ENCODE measurements at regions of chr22 and their contacts with region 1.

Region 1: DNA sequence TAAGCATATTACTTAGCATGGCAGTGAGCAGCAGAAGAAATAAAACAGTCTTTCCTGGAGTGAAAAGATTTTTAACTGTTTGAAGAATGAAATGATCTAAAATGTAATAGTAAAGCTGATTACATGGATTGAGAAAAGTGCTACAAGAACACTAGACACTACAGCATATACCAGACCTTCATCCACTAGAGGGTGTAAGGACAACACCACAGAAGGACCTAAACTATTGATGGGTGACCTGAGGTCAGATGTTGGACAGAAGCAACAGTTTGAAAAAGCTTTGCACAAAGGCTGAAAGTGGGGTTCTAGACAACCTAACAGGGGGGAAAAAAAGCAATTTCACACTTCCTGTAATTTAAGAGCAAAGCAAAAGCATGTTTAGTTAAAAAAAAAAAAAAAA is 97.7 kb downstream of the RBFOX2 start:
- DNase-seq: no peak
- H3K4me3 ChIP-seq: no peak overlapping the region
- H3K27ac ChIP-seq: no peak overlapping the region
- H3K4me1 ChIP-seq: no peaks in the 10 kb centered on the region
- H3K27me3 ChIP-seq: no peaks in the 10 kb centered on the region
- CTCF ChIP-seq: peak; percentile 15 to 68 (median 65)
- POLR2A ChIP-seq: no peak

Region 2: GRCh38 chr22:35792506-35792905 is 138.4 kb before region 1 on chr22:
- intact Hi-C with region 1: no loop called
- DNase-seq: no peak
- H3K4me3 ChIP-seq: no peak overlapping the region
- H3K27ac ChIP-seq: no peak overlapping the region
- H3K4me1 ChIP-seq: no peaks in the 10 kb centered on the region
- H3K27me3 ChIP-seq: no peaks in the 10 kb centered on the region
- CTCF ChIP-seq: no peak
- POLR2A ChIP-seq: no peak

Region 3: GRCh38 chr22:35918456-35918855 is 12.5 kb before region 1 on chr22:
- intact Hi-C with region 1: loop called (anchors 1 kb)
- DNase-seq: no peak
- H3K4me3 ChIP-seq: no peak overlapping the region
- H3K27ac ChIP-seq: peak overlapping the region in 1 of 2 donors; percentile 46
- H3K4me1 ChIP-seq: peaks cover 0 to 11% of the 10 kb centered on the region in 2 donors
- H3K27me3 ChIP-seq: no peaks in the 10 kb centered on the region
- CTCF ChIP-seq: no peak
- POLR2A ChIP-seq: no peak

Region 4: GRCh38 chr22:36104435-36104834 is 173.5 kb after region 1 on chr22:
- intact Hi-C with region 1: no loop called
- DNase-seq: no peak
- H3K4me3 ChIP-seq: no peak overlapping the region
- H3K27ac ChIP-seq: no peak overlapping the region
- H3K4me1 ChIP-seq: no peaks in the 10 kb centered on the region
- H3K27me3 ChIP-seq: no peaks in the 10 kb centered on the region
- CTCF ChIP-seq: no peak
- POLR2A ChIP-seq: no peak

Region 5: GRCh38 chr22:36123673-36124630 is 193.0 kb after region 1 on chr22:
- intact Hi-C with region 1: loop called (anchors 10 kb)
- DNase-seq: peak; percentile 89 to 96
- H3K4me3 ChIP-seq: peak overlapping the region in 2 of 3 donors; percentile 32 to 54
- H3K27ac ChIP-seq: peak overlapping the region; percentile 89 to 90
- H3K4me1 ChIP-seq: no peaks in the 10 kb centered on the region
- H3K27me3 ChIP-seq: no peaks in the 10 kb centered on the region
- CTCF ChIP-seq: peak; percentile 96 to 99 (median 98)
- POLR2A ChIP-seq: no peak

Region 6: DNA sequence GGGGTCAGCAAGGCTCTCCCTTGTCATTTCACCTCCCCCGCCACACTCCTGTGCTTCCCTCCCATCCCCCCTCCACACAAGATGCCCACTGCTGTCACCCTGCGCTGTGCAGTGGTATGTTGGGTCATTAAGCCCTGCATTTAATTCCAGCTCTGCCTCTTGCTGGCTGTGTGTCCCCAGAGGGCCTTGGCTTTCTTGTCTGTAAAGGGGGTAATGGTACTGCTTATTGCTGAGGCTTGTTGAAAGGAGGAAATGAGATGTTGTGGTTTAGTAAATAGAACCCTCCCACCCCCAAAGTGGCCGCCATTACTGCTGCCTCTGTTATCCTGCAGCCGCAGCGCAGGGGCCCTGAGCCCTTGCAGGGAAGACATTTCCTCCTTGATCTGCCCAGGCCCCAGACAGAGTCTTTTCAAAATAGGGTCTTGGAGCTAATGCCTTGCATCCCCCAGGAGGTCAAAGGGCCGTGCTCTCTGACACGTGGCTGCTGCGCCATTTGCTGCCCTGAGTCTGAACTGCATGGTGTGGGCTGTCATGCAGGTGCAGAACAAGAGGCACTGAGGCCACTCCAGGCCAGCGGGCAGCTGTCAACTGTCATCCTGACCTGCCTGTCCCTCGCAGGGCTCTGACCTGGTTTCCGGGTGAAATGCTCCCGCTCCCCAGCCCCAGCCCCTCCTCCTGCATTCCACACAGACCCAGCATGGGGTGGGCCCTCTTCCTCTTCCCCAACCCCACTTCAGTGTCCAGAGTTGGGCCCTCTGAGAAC is 867.2 kb after region 1 on chr22:
- intact Hi-C with region 1: no loop called
- DNase-seq: no peak
- H3K4me3 ChIP-seq: no peak overlapping the region
- H3K27ac ChIP-seq: no peak overlapping the region
- H3K4me1 ChIP-seq: no peaks in the 10 kb centered on the region
- H3K27me3 ChIP-seq: no peaks in the 10 kb centered on the region
- CTCF ChIP-seq: no peak
- POLR2A ChIP-seq: no peak